Left ventricle myocardium inferior (tissue), 1 donor: ENCODE measurements at regions of chr12 and their contacts with region 1.

Region 1: DNA sequence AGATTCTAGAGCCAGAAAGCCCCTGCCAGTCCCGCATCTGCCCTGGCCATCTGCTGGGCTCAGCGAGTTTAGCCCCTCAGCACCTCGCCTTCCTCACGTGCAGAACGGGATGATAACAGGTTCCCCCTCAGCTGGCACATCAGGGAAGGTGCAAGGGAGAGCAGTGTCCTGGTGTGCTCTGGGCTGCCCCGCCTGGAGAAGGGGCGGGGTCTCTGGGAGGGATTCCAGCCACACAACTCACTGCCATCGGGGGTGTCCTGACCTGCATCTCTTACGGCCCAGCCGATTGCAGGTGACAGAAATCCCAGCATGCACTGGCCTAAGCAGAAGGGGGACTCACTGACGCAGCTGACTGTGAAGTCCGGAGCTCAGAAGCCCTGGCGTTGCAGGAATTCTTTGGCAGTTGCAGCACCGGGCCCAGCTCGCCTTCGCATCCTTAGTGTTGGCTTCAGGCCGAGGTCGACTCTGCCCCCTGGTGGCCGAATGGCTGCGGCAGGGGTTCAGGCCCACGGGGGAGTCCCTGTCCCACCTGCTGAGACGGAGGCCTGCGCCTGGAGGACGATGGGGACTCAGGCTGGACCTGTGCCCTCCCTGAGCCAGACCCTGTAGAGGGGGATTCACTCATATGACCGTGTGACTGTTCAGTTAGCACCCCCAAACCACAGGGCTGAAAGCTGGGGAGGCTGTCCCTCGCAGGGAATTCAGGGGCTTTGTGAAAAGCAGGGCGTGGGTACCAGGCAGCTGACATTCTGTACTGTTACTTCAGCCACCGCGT is 178.6 kb downstream of the ADGRD1 start:
- DNase-seq: peak; percentile 70
- H3K4me3 ChIP-seq: no peak overlapping the region
- H3K27ac ChIP-seq: no peak overlapping the region
- H3K4me1 ChIP-seq: peaks cover 18% of the 10 kb centered on the region
- H3K27me3 ChIP-seq: no peaks in the 10 kb centered on the region
- CTCF ChIP-seq: peak; percentile 85

Region 2: GRCh38 chr12:130916251-130916911 is 215.9 kb before region 1 on chr12:
- intact Hi-C with region 1: loop called (anchors 10 kb)
- DNase-seq: peak; percentile 42
- H3K4me3 ChIP-seq: peak overlapping the region; percentile 42
- H3K27ac ChIP-seq: no peak overlapping the region
- H3K4me1 ChIP-seq: peaks cover 4% of the 10 kb centered on the region
- H3K27me3 ChIP-seq: peaks cover 30% of the 10 kb centered on the region
- CTCF ChIP-seq: peak; percentile 96

Region 3: GRCh38 chr12:130933269-130933995 is 198.9 kb before region 1 on chr12:
- intact Hi-C with region 1: no loop called
- DNase-seq: no peak
- H3K4me3 ChIP-seq: peak overlapping the region; percentile 17
- H3K27ac ChIP-seq: peak overlapping the region; percentile 56
- H3K4me1 ChIP-seq: no peaks in the 10 kb centered on the region
- H3K27me3 ChIP-seq: peaks cover 42% of the 10 kb centered on the region
- CTCF ChIP-seq: no peak